ENCODE measurements at regions of chr22 and their contacts with region 1.

Region 1: GRCh38 chr22:41603873-41604332 is 14.3 kb upstream of the PMM1 start:
- DNase-seq: peak; percentile 86
- H3K4me3 Mint-ChIP-seq: no peak overlapping the region
- H3K27ac Mint-ChIP-seq: peak overlapping the region; percentile 18
- H3K4me1 Mint-ChIP-seq: peaks cover 31% of the 10 kb centered on the region
- H3K27me3 Mint-ChIP-seq: no peaks in the 10 kb centered on the region

Region 2: GRCh38 chr22:41589391-41590241 is 14.3 kb before region 1 on chr22 and contains the start of gene PMM1:
- CTCF ChIA-PET with region 1: interaction called, 4 read pairs
- POLR2A ChIA-PET with region 1: interaction called, 10 read pairs
- intact Hi-C with region 1: loop called (anchors 1 kb)
- DNase-seq: peak; percentile 100
- H3K4me3 Mint-ChIP-seq: peak within 1 kb of the TSS; percentile 94
- H3K27ac Mint-ChIP-seq: peak within 1 kb of the TSS; percentile 81
- H3K4me1 Mint-ChIP-seq: peaks cover 12% of the 10 kb centered on the region
- H3K27me3 Mint-ChIP-seq: no peaks in the 10 kb centered on the region
- total RNA-seq, gene PMM1: 45.1 to 46.4 TPM

Region 3: GRCh38 chr22:42725606-42726355 is 1121.9 kb after region 1 on chr22:
- CTCF ChIA-PET with region 1: no interaction called
- POLR2A ChIA-PET with region 1: no interaction called
- intact Hi-C with region 1: no loop called
- DNase-seq: no peak
- H3K4me3 Mint-ChIP-seq: no peak overlapping the region
- H3K27ac Mint-ChIP-seq: no peak overlapping the region
- H3K4me1 Mint-ChIP-seq: peaks cover 5% of the 10 kb centered on the region
- H3K27me3 Mint-ChIP-seq: peaks cover 26% of the 10 kb centered on the region

Measured in activated CD4-positive, alpha-beta memory T cell treated with anti-CD3 and anti-CD28 coated beads for 36 hours (primary cell).